Naive thymus-derived CD4-positive, alpha-beta T cell (primary cell): ENCODE measurements at regions of chr1 and their contacts with region 1.

Region 1: DNA sequence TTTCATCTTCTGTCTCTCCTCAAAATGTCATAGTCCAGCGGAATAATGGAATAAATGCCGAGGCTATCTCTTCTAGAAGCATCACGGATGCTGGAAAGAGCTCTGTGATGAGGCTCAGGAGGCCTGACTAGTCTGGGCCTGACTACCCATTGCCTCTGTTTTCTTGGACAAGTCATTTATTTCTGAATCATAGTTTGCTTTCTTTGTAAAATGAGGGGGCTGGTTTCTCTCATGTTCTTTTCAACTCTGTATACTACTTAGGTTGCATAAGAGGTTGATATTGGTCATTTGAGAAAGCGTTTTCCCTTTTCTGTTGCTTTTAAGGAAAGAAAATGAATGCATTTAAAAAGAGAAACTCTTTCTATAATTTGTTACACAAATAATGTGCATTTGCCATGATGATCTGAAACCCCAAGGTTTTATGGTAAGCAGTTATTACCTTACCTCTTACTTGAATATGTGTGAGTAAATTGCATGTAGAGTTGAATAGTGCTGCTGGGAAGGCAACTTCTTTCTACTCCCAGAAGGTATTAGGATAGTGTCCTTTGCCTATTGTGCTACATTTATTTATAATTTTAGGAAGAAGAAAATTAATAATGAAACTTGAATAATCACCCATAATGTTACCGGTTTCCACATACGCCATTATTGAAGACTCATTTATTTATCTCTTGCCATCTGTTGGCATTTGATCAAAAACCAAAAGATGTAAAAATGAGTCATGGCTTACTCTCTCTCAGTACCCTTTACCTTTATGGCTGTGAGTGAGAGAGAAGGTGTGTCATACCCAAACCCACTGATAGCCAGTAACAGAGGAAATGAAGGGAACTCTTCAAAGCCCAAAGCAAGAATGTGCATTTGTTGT is 179.1 kb downstream of the FASLG start:
- DNase-seq: peak in 7 of 9 donors; percentile 47 to 78 (median 72)
- ATAC-seq: peak; percentile 99
- H3K4me3 ChIP-seq: no peak overlapping the region
- H3K4me3 Mint-ChIP-seq: peak overlapping the region in 9 of 10 donors; percentile 20 to 59 (median 41)
- H3K27ac ChIP-seq: no peak overlapping the region
- H3K27ac Mint-ChIP-seq: peak overlapping the region in 7 of 9 donors; percentile 63 to 92 (median 78)
- H3K4me1 ChIP-seq: peaks cover 12 to 16% of the 10 kb centered on the region in 2 donors
- H3K4me1 Mint-ChIP-seq: peaks cover 3 to 36% (median 28%) of the 10 kb centered on the region in 7 donors
- H3K27me3 ChIP-seq: no peaks in the 10 kb centered on the region
- H3K27me3 Mint-ChIP-seq: peaks cover 0 to 59% (median 0%) of the 10 kb centered on the region in 5 donors

Region 2: GRCh38 chr1:171636141-171636540 is 1201.9 kb before region 1 on chr1:
- CTCF ChIA-PET with region 1: no interaction called
- POLR2A ChIA-PET with region 1: no interaction called
- intact Hi-C with region 1: no loop called
- DNase-seq: no peak
- ATAC-seq: no peak
- H3K4me3 ChIP-seq: no peak overlapping the region
- H3K4me3 Mint-ChIP-seq: no peak overlapping the region
- H3K27ac ChIP-seq: no peak overlapping the region
- H3K27ac Mint-ChIP-seq: no peak overlapping the region
- H3K4me1 ChIP-seq: no peaks in the 10 kb centered on the region
- H3K4me1 Mint-ChIP-seq: peaks cover 0 to 9% (median 0%) of the 10 kb centered on the region in 7 donors
- H3K27me3 ChIP-seq: no peaks in the 10 kb centered on the region
- H3K27me3 Mint-ChIP-seq: peaks cover 0 to 7% (median 0%) of the 10 kb centered on the region in 5 donors

Region 3: GRCh38 chr1:172778456-172779455 is 59.3 kb before region 1 on chr1:
- CTCF ChIA-PET with region 1: no interaction called
- POLR2A ChIA-PET with region 1: no interaction called
- intact Hi-C with region 1: loop called in 1 of 2 experiments (anchors 1 kb)
- DNase-seq: peak in 6 of 9 donors; percentile 8 to 32 (median 18)
- ATAC-seq: peak; percentile 74
- H3K4me3 ChIP-seq: peak overlapping the region; percentile 17
- H3K4me3 Mint-ChIP-seq: peak overlapping the region in 9 of 10 donors; percentile 23 to 72 (median 51)
- H3K27ac ChIP-seq: no peak overlapping the region
- H3K27ac Mint-ChIP-seq: peak overlapping the region in 5 of 9 donors; percentile 1 to 48 (median 41)
- H3K4me1 ChIP-seq: peaks cover 0 to 9% of the 10 kb centered on the region in 2 donors
- H3K4me1 Mint-ChIP-seq: peaks cover 8 to 30% (median 17%) of the 10 kb centered on the region in 7 donors
- H3K27me3 ChIP-seq: no peaks in the 10 kb centered on the region
- H3K27me3 Mint-ChIP-seq: peaks cover 0 to 18% (median 0%) of the 10 kb centered on the region in 5 donors

Region 4: DNA sequence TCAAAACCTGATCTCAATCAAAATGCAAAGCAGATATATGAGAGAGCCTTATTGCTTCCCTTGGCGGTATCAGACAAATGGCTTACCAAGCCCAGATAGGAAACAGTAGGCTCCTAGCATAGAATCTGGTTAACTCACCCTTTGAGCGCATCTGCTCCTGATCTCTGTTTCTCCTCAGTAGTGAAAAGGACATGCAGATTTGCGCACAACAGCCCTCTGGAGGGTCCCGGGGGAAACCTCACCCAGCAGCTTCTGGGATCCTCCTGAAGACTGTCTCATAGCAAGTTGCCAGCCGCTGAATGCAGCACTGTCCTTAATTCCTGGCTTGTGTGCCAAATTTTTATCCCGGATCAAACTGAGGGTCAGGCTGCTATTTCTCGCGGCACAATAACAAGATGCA is 13.0 kb after region 1 on chr1:
- CTCF ChIA-PET with region 1: no interaction called
- POLR2A ChIA-PET with region 1: interaction called, 3 read pairs
- intact Hi-C with region 1: loop called in 1 of 2 experiments (anchors 1 kb)
- DNase-seq: no peak
- ATAC-seq: no peak
- H3K4me3 ChIP-seq: no peak overlapping the region
- H3K4me3 Mint-ChIP-seq: no peak overlapping the region
- H3K27ac ChIP-seq: no peak overlapping the region
- H3K27ac Mint-ChIP-seq: peak overlapping the region in 1 of 9 donors; percentile 18
- H3K4me1 ChIP-seq: no peaks in the 10 kb centered on the region
- H3K4me1 Mint-ChIP-seq: peaks cover 3 to 8% (median 6%) of the 10 kb centered on the region in 7 donors
- H3K27me3 ChIP-seq: no peaks in the 10 kb centered on the region
- H3K27me3 Mint-ChIP-seq: peaks cover 0 to 53% (median 0%) of the 10 kb centered on the region in 5 donors

Region 5: DNA sequence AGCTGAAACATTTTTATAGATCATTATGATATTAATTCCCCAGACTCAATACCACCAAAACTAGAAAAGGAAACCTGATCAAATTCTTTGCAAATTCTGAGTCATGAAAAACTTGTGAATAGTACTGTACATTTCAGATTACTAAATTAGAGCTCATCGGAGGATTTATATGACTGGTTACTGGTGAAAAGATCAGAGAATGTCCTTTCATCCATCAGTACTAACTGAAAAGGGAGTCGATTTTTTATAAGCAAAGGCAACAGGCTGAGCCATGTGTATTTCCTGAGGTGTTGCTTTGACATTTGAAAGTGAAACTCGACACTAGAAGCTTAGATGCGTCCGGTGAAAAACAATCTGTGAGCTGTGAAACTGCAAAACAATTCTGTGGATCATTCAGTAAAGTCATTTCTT is 57.0 kb after region 1 on chr1:
- CTCF ChIA-PET with region 1: interaction called, 3 read pairs
- POLR2A ChIA-PET with region 1: no interaction called
- intact Hi-C with region 1: loop called (anchors 1 to 2 kb)
- DNase-seq: peak in 7 of 9 donors; percentile 10 to 56 (median 38)
- ATAC-seq: peak; percentile 85
- H3K4me3 ChIP-seq: peak overlapping the region; percentile 41
- H3K4me3 Mint-ChIP-seq: peak overlapping the region; percentile 35 to 87 (median 81)
- H3K27ac ChIP-seq: peak overlapping the region; percentile 55
- H3K27ac Mint-ChIP-seq: peak overlapping the region; percentile 79 to 97 (median 88)
- H3K4me1 ChIP-seq: peaks cover 11 to 21% of the 10 kb centered on the region in 2 donors
- H3K4me1 Mint-ChIP-seq: peaks cover 19 to 58% (median 47%) of the 10 kb centered on the region in 7 donors
- H3K27me3 ChIP-seq: no peaks in the 10 kb centered on the region
- H3K27me3 Mint-ChIP-seq: peaks cover 0 to 39% (median 0%) of the 10 kb centered on the region in 5 donors

Region 6: DNA sequence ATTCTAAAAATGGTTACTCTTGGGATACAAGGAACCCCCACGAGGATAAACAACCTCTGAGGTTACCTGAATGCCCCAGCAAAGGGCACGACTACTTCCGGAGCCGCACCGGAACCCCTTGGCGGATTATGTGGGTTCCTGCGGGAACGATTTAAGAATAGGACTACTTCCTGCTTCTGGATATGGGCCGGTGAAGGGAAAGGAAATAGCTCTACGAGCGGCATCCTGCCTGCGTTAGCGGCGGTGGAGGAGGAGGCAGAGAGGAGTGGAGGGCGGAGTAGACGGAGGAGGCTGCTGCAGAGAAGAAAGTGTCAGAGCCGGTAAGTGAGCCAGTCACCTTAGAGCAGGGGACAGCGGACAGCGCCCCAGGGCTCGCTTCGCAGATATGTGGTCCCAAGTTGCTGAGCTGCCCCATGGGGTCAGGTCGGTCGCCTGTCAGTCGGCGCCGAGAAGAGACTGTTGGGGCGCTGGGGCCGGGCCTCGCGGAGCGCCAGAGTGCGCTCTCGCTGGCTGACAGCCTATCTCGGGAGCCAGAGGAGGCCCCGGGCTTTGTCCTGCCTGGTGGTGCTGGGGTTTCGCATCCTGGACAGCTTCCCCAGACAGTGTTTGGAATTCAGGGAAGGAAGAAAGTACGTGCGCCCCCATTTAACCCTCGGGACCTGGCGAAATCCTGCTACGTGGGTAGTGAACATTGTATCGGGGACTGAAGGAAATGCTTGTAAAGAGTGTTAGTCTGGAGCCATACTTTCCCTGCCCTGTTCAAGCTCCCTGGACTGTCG is 876.9 kb after region 1 on chr1 and contains the start of gene KLHL20:
- CTCF ChIA-PET with region 1: no interaction called
- POLR2A ChIA-PET with region 1: no interaction called
- intact Hi-C with region 1: loop called in 1 of 2 experiments (anchors 10 kb)
- DNase-seq: peak; percentile 60 to 92 (median 89)
- ATAC-seq: peak; percentile 98
- H3K4me3 ChIP-seq: peak within 1 kb of the TSS; percentile 77
- H3K4me3 Mint-ChIP-seq: peak within 1 kb of the TSS; percentile 90 to 100 (median 96)
- H3K27ac ChIP-seq: peak within 1 kb of the TSS; percentile 78
- H3K27ac Mint-ChIP-seq: peak within 1 kb of the TSS; percentile 89 to 99 (median 94)
- H3K4me1 ChIP-seq: peaks cover 11 to 18% of the 10 kb centered on the region in 2 donors
- H3K4me1 Mint-ChIP-seq: peaks cover 14 to 48% (median 35%) of the 10 kb centered on the region in 7 donors
- H3K27me3 ChIP-seq: no peaks in the 10 kb centered on the region
- H3K27me3 Mint-ChIP-seq: peaks cover 14 to 32% (median 19%) of the 10 kb centered on the region in 5 donors
- total RNA-seq, gene KLHL20: 28.3 to 40.9 (median 32.8) TPM